ENCODE measurements at regions of chr11 and their contacts with region 1.

Region 1: DNA sequence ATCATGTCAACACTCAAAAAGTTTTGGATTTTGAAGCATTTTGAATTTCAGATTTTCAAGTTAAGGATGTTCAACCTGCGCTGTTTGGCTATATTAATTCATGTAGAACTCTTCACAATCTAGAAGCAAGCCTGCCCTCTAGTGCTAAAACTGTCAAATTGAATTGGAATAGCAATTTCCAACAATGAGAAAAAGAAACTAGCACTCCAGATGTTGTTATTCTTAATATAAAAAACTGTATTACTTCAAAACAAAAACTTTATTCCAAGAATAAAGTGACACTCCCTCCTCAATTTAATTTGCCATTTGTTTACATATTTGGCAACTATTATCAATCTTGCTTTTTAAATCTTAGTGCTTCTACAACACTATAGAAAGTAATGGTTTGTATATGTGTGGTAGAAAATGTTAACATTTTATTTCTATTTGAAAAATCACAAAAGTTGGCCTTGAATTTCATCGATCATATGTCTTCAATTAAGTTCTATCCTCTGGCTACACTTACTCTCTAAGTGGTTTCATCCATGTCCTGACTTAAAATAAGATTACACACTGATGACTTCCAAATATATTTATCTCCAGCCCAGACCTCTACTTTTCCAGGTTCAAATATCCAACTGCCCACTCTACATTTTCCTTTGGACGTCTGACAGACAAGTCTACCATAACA is 36.6 kb downstream of the DCUN1D5 start:
- H3K4me3 Mint-ChIP-seq: no peak overlapping the region
- H3K27ac Mint-ChIP-seq: no peak overlapping the region
- H3K4me1 Mint-ChIP-seq: no peaks in the 10 kb centered on the region
- H3K27me3 Mint-ChIP-seq: no peaks in the 10 kb centered on the region

Region 2: DNA sequence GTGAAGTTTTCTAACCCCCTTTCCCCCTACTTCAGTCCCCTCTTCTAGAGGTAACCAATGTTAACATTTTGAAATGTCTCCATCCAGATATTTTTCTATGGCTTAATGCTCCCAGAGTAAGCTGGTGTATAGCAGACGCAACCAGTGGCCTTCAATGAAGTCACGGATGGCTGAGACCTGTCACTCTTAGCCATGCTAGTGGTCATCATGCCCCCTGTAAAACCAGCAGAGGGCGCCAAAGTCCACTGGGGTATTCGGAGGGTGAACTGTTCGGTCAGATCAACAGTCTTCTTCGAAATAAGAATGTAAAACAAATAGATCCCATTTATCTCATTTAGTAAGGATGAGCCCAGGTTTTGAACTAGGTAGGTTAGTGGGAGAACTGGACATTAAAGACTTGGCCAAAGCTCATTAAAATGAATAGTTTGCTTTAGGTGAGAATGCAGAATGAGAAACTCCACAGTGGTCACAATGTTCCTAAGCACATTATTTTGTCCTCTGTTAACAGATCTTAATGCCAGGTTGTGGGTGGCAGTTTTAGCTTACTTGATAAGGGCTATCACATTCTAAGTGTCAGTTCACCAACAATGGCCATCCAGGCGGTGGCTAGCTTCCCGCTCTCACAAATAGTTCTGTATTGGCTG is 322.0 kb before region 1 on chr11:
- intact Hi-C with region 1: loop called (anchors 2 kb)
- H3K4me3 Mint-ChIP-seq: no peak overlapping the region
- H3K27ac Mint-ChIP-seq: no peak overlapping the region
- H3K4me1 Mint-ChIP-seq: peaks cover 16% of the 10 kb centered on the region
- H3K27me3 Mint-ChIP-seq: peaks cover 37% of the 10 kb centered on the region

Region 3: DNA sequence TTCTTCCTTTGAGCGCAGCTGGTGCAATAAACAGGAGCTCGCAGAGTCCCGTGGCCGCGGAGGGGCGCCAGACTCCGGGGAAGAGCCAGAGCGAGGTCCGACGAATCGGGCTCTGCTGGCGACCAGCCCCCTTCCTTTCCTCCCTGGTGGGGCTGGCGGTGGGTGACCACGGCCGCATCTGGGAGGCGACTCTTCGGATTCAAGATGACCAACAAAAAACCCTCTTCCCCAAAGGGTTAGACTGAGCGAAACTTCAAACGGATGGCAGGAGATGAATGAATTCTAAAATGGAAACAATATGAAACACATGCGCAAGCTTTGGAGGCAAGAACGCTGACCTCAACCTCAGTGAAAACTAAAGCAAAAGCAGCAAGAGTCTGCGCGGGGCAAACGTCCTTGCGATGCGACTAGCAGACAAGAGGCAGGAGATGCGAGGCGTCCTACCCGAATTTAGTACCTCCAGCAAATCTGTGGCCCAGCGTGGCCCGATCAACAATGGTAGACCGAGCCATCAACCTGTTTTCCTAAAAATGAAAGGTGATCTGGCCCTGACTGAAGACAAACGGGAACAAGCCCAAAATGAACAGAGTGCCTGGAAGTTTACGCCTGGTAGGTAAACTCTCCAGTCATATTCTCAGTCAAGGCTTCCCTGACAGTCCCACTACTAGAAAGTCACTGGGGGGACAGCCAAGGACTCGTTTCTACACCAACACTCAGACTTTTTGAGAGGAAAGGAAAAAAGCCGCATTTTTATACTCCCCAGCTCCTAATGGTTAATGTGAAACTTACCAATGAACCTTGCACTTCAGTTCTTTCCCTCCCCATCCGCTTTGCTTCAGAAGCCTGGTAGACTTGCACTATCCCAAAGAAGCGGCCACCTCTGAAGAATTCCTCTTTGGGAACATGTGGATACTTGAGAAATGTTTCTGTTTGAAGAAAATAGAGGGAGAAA is 223.6 kb before region 1 on chr11:
- intact Hi-C with region 1: loop called (anchors 10 kb)
- H3K4me3 Mint-ChIP-seq: peak overlapping the region; percentile 64
- H3K27ac Mint-ChIP-seq: peak overlapping the region; percentile 37
- H3K4me1 Mint-ChIP-seq: peaks cover 11% of the 10 kb centered on the region
- H3K27me3 Mint-ChIP-seq: peaks cover 51% of the 10 kb centered on the region

Region 4: GRCh38 chr11:102914238-102915043 is 140.9 kb before region 1 on chr11:
- intact Hi-C with region 1: loop called (anchors 10 kb)
- H3K4me3 Mint-ChIP-seq: no peak overlapping the region
- H3K27ac Mint-ChIP-seq: peak overlapping the region; percentile 37
- H3K4me1 Mint-ChIP-seq: peaks cover 22% of the 10 kb centered on the region
- H3K27me3 Mint-ChIP-seq: peaks cover 48% of the 10 kb centered on the region

Region 5: GRCh38 chr11:103035791-103036434 is 19.4 kb before region 1 on chr11:
- intact Hi-C with region 1: loop called (anchors 2 kb)
- H3K4me3 Mint-ChIP-seq: no peak overlapping the region
- H3K27ac Mint-ChIP-seq: peak overlapping the region; percentile 49
- H3K4me1 Mint-ChIP-seq: peaks cover 6% of the 10 kb centered on the region
- H3K27me3 Mint-ChIP-seq: peaks cover 2% of the 10 kb centered on the region

Region 6: GRCh38 chr11:103413266-103413888 is 358.0 kb after region 1 on chr11:
- intact Hi-C with region 1: no loop called
- H3K4me3 Mint-ChIP-seq: no peak overlapping the region
- H3K27ac Mint-ChIP-seq: no peak overlapping the region
- H3K4me1 Mint-ChIP-seq: no peaks in the 10 kb centered on the region
- H3K27me3 Mint-ChIP-seq: no peaks in the 10 kb centered on the region

Measured in dendritic cell treated with granulocyte-macrophage colony-stimulating factor and Interleukin-4, amounts not matched to agents 40 ng/mL and 50 ng/mL, for 4 days (primary cell).